HCT116 (cell line): ENCODE measurements at regions of chr10 and their contacts with region 1.

Region 1: GRCh38 chr10:22174442-22174841 is 43.4 kb downstream of the EBLN1 start:
- DNase-seq: no peak
- ATAC-seq: no peak
- H3K4me3 ChIP-seq: no peak overlapping the region
- H3K27ac ChIP-seq: no peak overlapping the region
- H3K4me1 ChIP-seq: no peaks in the 10 kb centered on the region
- H3K27me3 ChIP-seq: no peaks in the 10 kb centered on the region
- CTCF ChIP-seq: no peak
- POLR2A ChIP-seq: no peak
- RAD21 ChIP-seq: no peak

Region 2: DNA sequence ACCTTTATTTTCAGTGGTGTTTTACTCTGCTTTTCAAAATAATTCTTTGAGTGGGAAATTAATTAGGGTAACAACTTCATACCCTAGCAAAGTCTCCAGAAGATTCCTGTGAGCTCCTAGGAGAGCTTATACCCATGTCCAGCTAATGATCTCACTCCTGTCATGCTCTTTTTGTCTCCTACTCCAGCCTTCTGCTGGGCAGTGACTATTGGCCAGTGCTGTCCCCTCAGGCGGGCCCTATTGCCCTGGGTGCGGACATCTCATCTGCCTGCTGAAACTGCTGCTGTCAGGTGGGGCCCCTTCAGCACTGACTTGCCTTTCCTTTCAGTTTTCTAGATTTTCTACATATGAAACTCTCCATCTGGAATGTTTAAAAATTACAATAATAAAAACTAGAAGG is 36.9 kb before region 1 on chr10:
- CTCF ChIA-PET with region 1: no interaction called
- POLR2A ChIA-PET with region 1: no interaction called
- RAD21 ChIA-PET with region 1: no interaction called
- intact Hi-C with region 1: loop called (anchors 2 kb)
- DNase-seq: no peak
- ATAC-seq: no peak
- H3K4me3 ChIP-seq: no peak overlapping the region
- H3K27ac ChIP-seq: no peak overlapping the region
- H3K4me1 ChIP-seq: no peaks in the 10 kb centered on the region
- H3K27me3 ChIP-seq: no peaks in the 10 kb centered on the region
- CTCF ChIP-seq: no peak
- POLR2A ChIP-seq: no peak
- RAD21 ChIP-seq: no peak

Region 3: GRCh38 chr10:22158426-22158825 is 16.0 kb before region 1 on chr10:
- CTCF ChIA-PET with region 1: no interaction called
- POLR2A ChIA-PET with region 1: no interaction called
- RAD21 ChIA-PET with region 1: no interaction called
- intact Hi-C with region 1: no loop called
- DNase-seq: no peak
- ATAC-seq: no peak
- H3K4me3 ChIP-seq: no peak overlapping the region
- H3K27ac ChIP-seq: no peak overlapping the region
- H3K4me1 ChIP-seq: no peaks in the 10 kb centered on the region
- H3K27me3 ChIP-seq: no peaks in the 10 kb centered on the region
- CTCF ChIP-seq: no peak
- POLR2A ChIP-seq: no peak
- RAD21 ChIP-seq: no peak